GM12878 (cell line): ENCODE measurements at regions of chr12 and their contacts with region 1.

Region 1: GRCh38 chr12:53047221-53048042 is 2.4 kb upstream of the TNS2 start:
- DNase-seq: no peak
- ATAC-seq: peak; percentile 66
- H3K4me3 ChIP-seq: peak overlapping the region; percentile 36; the same call in 1 of the 2 replicates
- H3K27ac ChIP-seq: no peak overlapping the region
- H3K4me1 ChIP-seq: peaks cover 15% of the 10 kb centered on the region
- H3K27me3 ChIP-seq: no peaks in the 10 kb centered on the region
- CTCF ChIP-seq: peak in 1 of 3 experiments; percentile 49; a peak in 3 of 6 replicates
- EP300 ChIP-seq: no peak
- POLR2A ChIP-seq: 0 out of 2 replicates have a peak, but pooled peaks have one; percentile 32
- RAD21 ChIP-seq: no peak

Region 2: GRCh38 chr12:53036802-53037201 is 10.6 kb before region 1 on chr12:
- CTCF ChIA-PET with region 1: interaction called, 10 read pairs
- POLR2A ChIA-PET with region 1: interaction called, 3 read pairs
- RAD21 ChIA-PET with region 1: no interaction called
- SMC1A ChIA-PET with region 1: interaction called, 3 read pairs
- in situ Hi-C with region 1: no loop called
- intact Hi-C with region 1: no loop called
- DNase-seq: no peak
- ATAC-seq: no peak
- H3K4me3 ChIP-seq: no peak overlapping the region
- H3K27ac ChIP-seq: no peak overlapping the region
- H3K4me1 ChIP-seq: no peaks in the 10 kb centered on the region
- H3K27me3 ChIP-seq: no peaks in the 10 kb centered on the region
- CTCF ChIP-seq: no peak
- EP300 ChIP-seq: no peak
- POLR2A ChIP-seq: no peak
- RAD21 ChIP-seq: no peak